BJ (cell line): ENCODE measurements at regions of chr3 and their contacts with region 1.

Region 1: DNA sequence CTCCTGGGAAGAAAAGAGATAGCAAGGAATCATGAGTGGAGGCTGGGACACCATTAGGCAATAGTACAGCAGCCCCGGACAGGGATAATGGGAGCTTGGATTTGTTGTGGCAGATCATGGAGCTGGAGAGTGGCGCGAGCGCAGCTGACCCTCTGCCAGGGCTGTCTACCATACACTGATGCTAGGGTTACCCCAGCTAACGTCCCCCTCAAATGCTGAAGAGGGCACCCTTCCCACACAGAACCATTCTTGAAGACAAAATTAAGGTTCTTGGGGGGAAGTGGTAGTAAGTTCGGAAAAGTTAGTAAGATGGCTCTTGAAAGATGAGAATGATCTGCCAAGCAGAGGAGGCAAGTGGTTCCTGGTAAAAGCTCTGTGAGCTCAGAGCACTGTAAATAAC is 61.1 kb downstream of the ST3GAL6 start:
- DNase-seq: no peak
- H3K4me3 ChIP-seq: no peak overlapping the region
- H3K27me3 ChIP-seq: no peaks in the 10 kb centered on the region
- CTCF ChIP-seq: peak; percentile 17; the same call in 1 of the 2 replicates

Region 2: GRCh38 chr3:98806541-98806941 is 17.7 kb before region 1 on chr3:
- CTCF ChIA-PET with region 1: no interaction called
- POLR2A ChIA-PET with region 1: no interaction called
- DNase-seq: no peak
- H3K4me3 ChIP-seq: no peak overlapping the region
- H3K27me3 ChIP-seq: no peaks in the 10 kb centered on the region
- CTCF ChIP-seq: no peak

Region 3: DNA sequence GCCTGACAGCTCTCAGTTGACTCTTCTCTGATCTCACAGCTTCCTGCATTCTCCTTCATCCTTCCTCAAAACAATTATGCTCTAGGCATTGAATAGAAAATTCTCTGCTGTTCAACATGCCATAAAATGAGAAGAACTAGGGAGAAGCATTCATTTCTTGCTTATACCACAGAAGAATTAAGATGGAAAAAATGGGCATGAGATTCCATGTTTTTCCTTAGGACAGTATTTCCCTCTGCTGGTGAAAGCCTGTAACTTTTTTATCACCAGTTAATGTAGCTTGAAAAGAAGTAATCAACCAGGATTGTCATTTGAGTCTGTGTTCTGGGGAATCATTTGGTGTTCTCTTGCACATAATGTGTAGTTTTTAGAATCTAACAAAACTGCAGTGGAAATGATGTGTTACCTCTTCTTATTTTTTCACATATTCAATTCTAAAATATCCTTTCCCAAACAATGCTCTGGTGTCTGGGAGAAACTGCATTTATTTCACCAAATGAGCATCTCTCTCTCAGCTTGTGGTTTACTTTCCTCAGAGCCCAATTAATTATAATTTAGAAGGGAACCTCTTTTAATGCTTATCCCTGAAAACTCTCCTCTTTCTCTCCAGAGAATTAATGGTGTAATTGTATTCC is 170.0 kb after region 1 on chr3:
- CTCF ChIA-PET with region 1: interaction called, 27 read pairs
- POLR2A ChIA-PET with region 1: no interaction called
- DNase-seq: no peak
- H3K4me3 ChIP-seq: no peak overlapping the region
- H3K27me3 ChIP-seq: no peaks in the 10 kb centered on the region
- CTCF ChIP-seq: peak; percentile 67